Left cardiac atrium (tissue), 4 donors: ENCODE measurements at regions of chr14 and their contacts with region 1.

Region 1: GRCh38 chr14:70907176-70907995 is at the start of gene PCNX1:
- DNase-seq: peak; percentile 90
- ATAC-seq: peak; percentile 86 to 91
- total RNA-seq, gene PCNX1: 31.0 to 44.1 TPM

Region 2: GRCh38 chr14:70955543-70956480 is 48.4 kb after region 1 on chr14:
- intact Hi-C with region 1: loop called (anchors 5 to 10 kb)
- DNase-seq: no peak
- ATAC-seq: peak in 1 of 2 donors; percentile 42

Region 3: GRCh38 chr14:70962935-70963334 is 55.5 kb after region 1 on chr14:
- intact Hi-C with region 1: loop called (anchors 5 to 10 kb)
- DNase-seq: no peak
- ATAC-seq: no peak

Region 4: GRCh38 chr14:70972107-70972976 is 65.0 kb after region 1 on chr14:
- intact Hi-C with region 1: loop called (anchors 5 to 10 kb)
- DNase-seq: peak; percentile 84
- ATAC-seq: peak; percentile 88 to 91

Region 5: DNA sequence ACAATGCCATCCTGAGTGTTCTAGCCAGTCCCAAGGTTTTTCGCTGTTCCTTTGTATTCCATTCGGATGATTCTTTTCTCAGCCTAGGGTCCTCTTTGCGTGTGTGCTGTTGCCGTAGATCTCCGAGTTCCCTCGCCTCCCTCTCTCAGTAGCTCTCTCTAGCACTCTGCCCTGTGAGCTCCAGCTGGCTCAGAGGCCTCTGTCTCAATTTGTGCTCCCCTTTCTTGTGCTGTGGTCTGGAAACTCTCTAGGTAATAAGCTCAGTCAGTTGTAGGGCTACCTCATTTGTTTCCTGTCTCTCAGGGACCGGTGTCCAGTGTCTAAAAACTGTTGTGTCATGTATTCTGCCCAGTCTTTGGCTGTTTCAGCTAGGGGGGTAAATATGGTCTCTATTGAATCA is 179.2 kb after region 1 on chr14:
- intact Hi-C with region 1: no loop called
- DNase-seq: no peak
- ATAC-seq: no peak